CD8-positive, alpha-beta memory T cell (primary cell): ENCODE measurements at regions of chr13 and their contacts with region 1.

Region 1: GRCh38 chr13:102773441-102774215 is at the start of gene TEX30:
- DNase-seq: peak; percentile 80 to 91 (median 90)
- H3K4me3 ChIP-seq: peak within 1 kb of the TSS; percentile 87
- H3K4me3 Mint-ChIP-seq: peak within 1 kb of the TSS; percentile 88 to 96 (median 92)
- H3K27ac ChIP-seq: peak within 1 kb of the TSS; percentile 77
- H3K27ac Mint-ChIP-seq: peak within 1 kb of the TSS; percentile 65 to 98 (median 95)
- H3K4me1 ChIP-seq: peaks cover 5% of the 10 kb centered on the region
- H3K4me1 Mint-ChIP-seq: peaks cover 35 to 52% (median 49%) of the 10 kb centered on the region in 3 donors
- H3K27me3 ChIP-seq: no peaks in the 10 kb centered on the region
- H3K27me3 Mint-ChIP-seq: peaks cover 0 to 3% of the 10 kb centered on the region in 2 donors
- total RNA-seq, gene TEX30: 58.5 to 64.3 TPM

Region 2: DNA sequence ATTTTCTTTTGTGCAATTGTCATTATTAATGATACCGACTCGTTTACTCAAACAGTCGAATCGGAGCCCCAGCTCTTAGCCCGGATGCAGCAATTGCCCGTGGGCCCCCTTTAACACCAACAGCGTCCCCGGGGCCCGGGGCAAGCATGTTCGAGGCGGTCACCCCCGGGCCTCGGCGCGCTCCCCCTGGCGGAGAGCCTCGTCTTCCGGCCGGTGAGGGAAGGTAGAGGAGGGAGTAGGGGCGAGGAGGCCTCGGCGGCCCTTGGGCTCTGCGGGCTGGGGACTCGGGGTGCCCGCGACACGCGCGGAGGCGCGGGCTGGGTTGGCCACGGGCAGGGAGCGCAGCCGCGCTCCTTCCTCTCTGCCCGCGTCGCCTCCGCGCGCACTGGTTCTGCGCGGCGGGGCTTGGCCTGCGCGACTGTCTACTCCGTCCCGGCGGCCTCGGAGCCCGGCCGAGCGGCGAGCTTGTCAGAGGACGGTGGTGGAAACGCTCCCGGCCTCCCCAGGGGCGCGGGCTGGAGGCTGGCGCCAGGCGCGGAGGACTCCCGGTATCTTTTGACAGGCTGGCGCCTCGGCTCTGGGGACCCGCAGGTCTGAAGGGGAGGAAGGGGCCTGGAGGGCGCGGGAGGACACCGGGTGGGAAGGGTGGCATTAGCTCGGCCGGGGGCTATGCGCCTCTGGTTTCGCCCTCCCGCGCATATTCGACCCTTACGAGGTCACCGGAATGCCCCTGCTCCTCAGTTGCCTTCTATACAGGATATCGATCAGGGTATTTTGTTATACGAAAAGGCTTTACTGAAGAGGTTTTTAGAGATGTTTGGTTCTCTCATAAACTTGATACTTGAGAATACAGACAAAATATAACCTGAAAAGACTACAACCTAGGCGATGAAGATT is 26.8 kb after region 1 on chr13:
- CTCF ChIA-PET with region 1: interaction called, 28 read pairs
- POLR2A ChIA-PET with region 1: interaction called, 9 read pairs
- DNase-seq: peak; percentile 73 to 88 (median 80)
- H3K4me3 ChIP-seq: peak overlapping the region; percentile 67
- H3K4me3 Mint-ChIP-seq: peak overlapping the region; percentile 89 to 98 (median 96)
- H3K27ac ChIP-seq: peak overlapping the region; percentile 61
- H3K27ac Mint-ChIP-seq: peak overlapping the region; percentile 59 to 95 (median 78)
- H3K4me1 ChIP-seq: peaks cover 6% of the 10 kb centered on the region
- H3K4me1 Mint-ChIP-seq: peaks cover 28 to 49% (median 45%) of the 10 kb centered on the region in 3 donors
- H3K27me3 ChIP-seq: no peaks in the 10 kb centered on the region
- H3K27me3 Mint-ChIP-seq: peaks cover 0 to 4% of the 10 kb centered on the region in 2 donors